ENCODE measurements at regions of chr3 and their contacts with region 1.

Region 1: DNA sequence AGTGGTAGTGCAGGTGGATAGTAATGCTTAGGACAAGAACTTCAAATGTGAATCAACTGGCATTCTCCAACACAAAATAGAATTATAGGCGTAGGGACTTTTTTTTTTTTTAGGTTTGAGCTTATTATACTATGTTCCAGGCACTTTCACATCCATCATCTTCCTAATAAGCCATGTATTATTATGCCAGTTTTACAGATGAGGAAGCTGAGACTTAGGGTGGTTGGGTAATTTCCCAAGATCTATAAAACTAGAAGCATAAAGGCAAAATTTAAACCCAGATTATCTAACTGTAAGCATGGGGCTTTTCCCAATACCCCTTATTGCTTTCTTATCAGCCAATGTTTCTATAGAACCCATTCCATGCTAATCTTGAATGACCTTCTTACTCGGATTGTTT is 75.1 kb upstream of the ETV5 start:
- DNase-seq: no peak
- ATAC-seq: no peak
- H3K4me3 ChIP-seq: no peak overlapping the region
- H3K27ac ChIP-seq: no peak overlapping the region
- H3K4me1 ChIP-seq: no peaks in the 10 kb centered on the region
- H3K27me3 ChIP-seq: peaks cover 51% of the 10 kb centered on the region
- CTCF ChIP-seq: no peak

Region 2: GRCh38 chr3:186166036-186166435 is 18.0 kb before region 1 on chr3:
- CTCF ChIA-PET with region 1: no interaction called
- POLR2A ChIA-PET with region 1: interaction called, 11 read pairs
- intact Hi-C with region 1: no loop called
- DNase-seq: no peak
- ATAC-seq: no peak
- H3K4me3 ChIP-seq: no peak overlapping the region
- H3K27ac ChIP-seq: no peak overlapping the region
- H3K4me1 ChIP-seq: no peaks in the 10 kb centered on the region
- H3K27me3 ChIP-seq: peaks cover 65% of the 10 kb centered on the region
- CTCF ChIP-seq: no peak

Region 3: DNA sequence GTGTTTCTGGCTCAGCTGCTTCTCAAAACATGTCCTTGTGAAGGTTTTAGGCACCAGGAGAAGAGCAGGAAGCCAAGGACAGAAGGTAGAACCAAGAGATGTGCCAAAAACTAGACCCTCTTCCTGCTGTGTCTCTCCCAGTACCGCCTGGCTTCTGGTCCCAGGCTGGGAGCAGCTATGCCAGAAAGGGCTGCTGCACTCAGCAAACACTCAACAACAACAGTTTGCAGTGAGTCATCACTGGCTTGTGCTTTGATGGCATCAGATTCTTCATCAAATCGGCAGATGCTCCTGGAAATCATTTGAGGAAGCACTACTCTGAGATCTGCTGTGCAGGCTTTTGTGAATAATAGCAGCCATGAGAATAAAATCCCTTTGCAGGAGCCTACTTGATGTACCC is 114.9 kb after region 1 on chr3:
- CTCF ChIA-PET with region 1: no interaction called
- POLR2A ChIA-PET with region 1: no interaction called
- intact Hi-C with region 1: no loop called
- DNase-seq: peak; percentile 41
- ATAC-seq: peak; percentile 49; the same call in 1 of the 2 replicates
- H3K4me3 ChIP-seq: no peak overlapping the region
- H3K27ac ChIP-seq: no peak overlapping the region
- H3K4me1 ChIP-seq: no peaks in the 10 kb centered on the region
- H3K27me3 ChIP-seq: peaks cover 26% of the 10 kb centered on the region
- CTCF ChIP-seq: no peak

Region 4: DNA sequence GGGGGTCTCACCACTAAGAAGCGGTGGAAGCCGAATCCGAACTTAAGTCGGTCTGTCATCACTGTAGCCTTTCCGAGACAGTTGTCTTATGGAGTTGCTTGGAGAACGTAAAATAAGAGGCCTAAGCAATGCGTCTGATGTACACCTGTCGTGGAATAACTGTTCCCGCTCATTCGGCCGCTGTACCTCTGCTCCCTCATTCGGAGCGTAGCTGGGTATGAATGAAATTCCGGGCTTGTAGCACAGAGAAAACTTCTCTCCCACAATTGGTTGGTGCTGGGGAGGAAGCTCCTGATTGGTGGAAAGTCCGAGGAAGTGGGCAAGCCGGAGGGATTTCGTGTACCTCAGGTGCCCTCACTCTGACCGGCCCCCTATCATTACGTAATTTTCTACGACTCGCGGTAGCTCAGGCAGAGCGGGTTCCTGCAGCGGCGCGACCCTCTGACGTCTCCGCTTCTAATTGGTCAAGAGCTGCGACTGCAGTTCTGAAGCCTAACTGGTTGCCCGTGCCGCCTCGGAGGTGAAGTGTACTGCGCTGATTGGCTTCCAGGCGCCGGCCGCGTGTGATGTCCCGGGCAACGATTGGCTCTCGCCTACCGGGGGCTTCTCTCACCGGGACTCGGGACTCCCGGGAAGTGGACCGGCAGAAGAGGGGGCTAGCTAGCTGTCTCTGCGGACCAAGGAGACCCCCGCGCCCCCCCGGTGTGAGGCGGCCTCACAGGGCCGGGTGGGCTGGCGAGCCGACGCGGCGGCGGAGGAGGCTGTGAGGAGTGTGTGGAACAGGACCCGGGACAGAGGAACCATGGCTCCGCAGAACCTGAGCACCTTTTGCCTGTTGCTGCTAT is 386.3 kb after region 1 on chr3 and contains the start of gene DNAJB11:
- CTCF ChIA-PET with region 1: no interaction called
- POLR2A ChIA-PET with region 1: no interaction called
- intact Hi-C with region 1: no loop called
- DNase-seq: peak; percentile 99
- ATAC-seq: peak; percentile 82
- H3K4me3 ChIP-seq: peak within 1 kb of the TSS; percentile 92
- H3K27ac ChIP-seq: peak within 1 kb of the TSS; percentile 48
- H3K4me1 ChIP-seq: peaks cover 16% of the 10 kb centered on the region
- H3K27me3 ChIP-seq: no peaks in the 10 kb centered on the region
- CTCF ChIP-seq: no peak
- total RNA-seq, gene DNAJB11: 117 and 120 TPM in 2 replicates